ENCODE measurements at regions of chr4 and their contacts with region 1.

Region 1: DNA sequence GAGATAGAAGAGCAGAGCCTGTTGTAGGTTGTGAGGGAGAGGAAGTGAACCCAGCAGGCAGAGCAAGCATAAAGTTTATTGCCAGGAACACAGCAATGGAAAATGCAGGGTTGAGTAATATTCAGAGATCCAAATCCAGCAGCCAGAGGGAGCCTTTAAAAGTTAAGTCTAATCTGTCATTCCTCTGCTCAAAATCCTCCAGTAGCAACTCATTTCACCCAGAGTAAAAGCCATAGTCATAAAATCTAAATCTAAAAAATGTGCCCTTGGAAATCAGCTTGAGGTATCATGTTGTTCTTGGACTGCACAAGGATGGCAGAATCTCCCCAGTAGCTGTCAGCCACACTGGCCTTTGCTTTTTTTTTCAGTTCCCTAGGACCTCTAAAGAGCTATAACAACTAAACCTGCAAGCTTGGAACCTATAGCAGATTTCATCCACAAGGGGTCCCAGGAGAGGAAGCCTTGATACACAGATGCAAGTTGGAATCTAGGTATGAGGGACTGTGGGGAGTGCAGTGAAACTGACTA is 62.9 kb upstream of the FRAS1 start:
- DNase-seq: no peak
- ATAC-seq: peak; percentile 84

Region 2: GRCh38 chr4:77843628-77844027 is 150.6 kb before region 1 on chr4:
- intact Hi-C with region 1: no loop called
- DNase-seq: no peak
- ATAC-seq: no peak

Region 3: GRCh38 chr4:77938560-77938959 is 55.7 kb before region 1 on chr4:
- intact Hi-C with region 1: no loop called
- DNase-seq: no peak
- ATAC-seq: no peak

Region 4: DNA sequence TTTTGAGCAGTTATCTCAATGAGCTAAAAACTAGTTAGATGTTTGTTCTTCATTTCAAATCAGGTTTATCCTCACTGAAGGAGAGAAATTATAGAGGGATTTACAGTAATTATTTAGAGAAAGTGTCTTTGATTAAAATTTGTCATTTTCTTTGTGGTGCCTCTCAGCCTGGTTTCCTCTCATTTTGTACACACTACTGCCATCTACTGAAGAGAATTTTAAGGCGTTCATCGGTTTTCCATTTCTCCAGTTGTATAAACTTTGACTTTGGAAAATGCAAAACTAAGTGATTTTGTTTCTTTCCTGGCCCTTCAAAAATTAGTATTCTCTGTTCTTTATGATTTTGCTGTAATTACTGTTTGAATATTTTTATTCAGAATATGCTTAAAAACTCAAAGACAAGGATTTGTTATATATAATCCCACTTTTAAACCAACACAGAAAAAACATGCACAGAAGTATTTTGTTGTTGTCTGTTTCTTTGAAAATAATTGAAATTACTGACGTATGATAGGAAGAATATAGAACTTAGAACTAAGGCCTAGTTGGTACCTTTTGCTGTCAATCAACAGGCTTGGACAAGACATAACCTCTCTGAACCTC is 522.9 kb after region 1 on chr4:
- intact Hi-C with region 1: loop called (anchors 5 kb)
- DNase-seq: no peak
- ATAC-seq: no peak